Ascending aorta (tissue), 2 donors: ENCODE measurements at regions of chr15 and their contacts with region 1.

Region 1: DNA sequence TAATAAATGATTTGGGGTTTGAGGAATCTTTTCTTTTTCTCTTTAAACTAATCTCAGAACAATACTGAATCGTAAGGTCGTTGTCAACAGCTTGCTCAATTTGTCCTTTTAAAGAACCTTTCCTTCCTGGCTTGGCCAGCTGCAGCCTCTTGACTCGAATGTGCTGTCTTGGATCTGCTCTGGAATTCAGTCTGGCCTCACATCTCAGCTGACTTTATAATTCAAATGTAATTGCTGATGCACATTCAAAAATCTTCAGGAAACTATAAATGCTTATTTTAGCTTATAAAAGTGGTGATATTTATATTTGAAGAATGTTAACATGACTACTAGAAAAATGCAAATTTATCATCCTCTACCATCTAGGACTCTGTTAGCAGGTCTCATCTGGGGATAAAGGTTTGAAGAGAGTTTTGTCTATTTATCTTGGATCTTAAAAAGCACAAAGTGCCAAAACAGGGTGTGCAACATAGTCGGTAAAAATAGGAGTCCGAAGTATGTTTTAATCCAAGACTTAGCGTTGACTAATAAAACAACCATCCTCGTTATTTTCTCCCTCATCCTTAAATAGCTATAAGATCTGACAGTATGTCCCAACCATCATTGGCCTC is 1035.2 kb downstream of the MCTP2 start:
- DNase-seq: peak in 1 of 2 donors; percentile 68
- H3K4me3 ChIP-seq: no peak overlapping the region
- H3K27ac ChIP-seq: peak overlapping the region; percentile 82 to 90
- H3K4me1 ChIP-seq: peaks cover 3 to 42% of the 10 kb centered on the region in 2 donors
- H3K27me3 ChIP-seq: no peaks in the 10 kb centered on the region
- CTCF ChIP-seq: no peak

Region 2: DNA sequence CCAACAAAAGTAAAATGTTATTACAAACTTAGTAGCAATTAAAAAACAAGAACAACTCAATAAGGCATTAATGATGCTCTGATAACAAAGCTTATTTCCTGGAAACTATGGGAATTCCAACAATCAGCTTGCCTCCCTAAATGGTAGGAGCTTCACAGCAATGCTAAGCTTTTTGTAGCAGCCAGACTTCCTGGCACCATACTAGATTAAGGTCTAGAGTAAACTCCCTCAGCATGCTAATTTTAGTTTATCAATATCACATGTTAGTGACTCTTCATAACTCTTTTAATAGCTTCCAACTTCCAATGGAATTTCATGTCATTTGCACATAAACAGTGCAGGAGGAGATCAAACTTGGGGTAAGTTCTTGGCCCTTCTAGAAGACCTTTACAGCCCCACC is 253.2 kb before region 1 on chr15:
- intact Hi-C with region 1: no loop called
- DNase-seq: no peak
- H3K4me3 ChIP-seq: no peak overlapping the region
- H3K27ac ChIP-seq: no peak overlapping the region
- H3K4me1 ChIP-seq: no peaks in the 10 kb centered on the region
- H3K27me3 ChIP-seq: no peaks in the 10 kb centered on the region
- CTCF ChIP-seq: no peak

Region 3: GRCh38 chr15:95086531-95087252 is 179.9 kb before region 1 on chr15:
- intact Hi-C with region 1: no loop called
- DNase-seq: no peak
- H3K4me3 ChIP-seq: no peak overlapping the region
- H3K27ac ChIP-seq: no peak overlapping the region
- H3K4me1 ChIP-seq: no peaks in the 10 kb centered on the region
- H3K27me3 ChIP-seq: no peaks in the 10 kb centered on the region
- CTCF ChIP-seq: no peak

Region 4: DNA sequence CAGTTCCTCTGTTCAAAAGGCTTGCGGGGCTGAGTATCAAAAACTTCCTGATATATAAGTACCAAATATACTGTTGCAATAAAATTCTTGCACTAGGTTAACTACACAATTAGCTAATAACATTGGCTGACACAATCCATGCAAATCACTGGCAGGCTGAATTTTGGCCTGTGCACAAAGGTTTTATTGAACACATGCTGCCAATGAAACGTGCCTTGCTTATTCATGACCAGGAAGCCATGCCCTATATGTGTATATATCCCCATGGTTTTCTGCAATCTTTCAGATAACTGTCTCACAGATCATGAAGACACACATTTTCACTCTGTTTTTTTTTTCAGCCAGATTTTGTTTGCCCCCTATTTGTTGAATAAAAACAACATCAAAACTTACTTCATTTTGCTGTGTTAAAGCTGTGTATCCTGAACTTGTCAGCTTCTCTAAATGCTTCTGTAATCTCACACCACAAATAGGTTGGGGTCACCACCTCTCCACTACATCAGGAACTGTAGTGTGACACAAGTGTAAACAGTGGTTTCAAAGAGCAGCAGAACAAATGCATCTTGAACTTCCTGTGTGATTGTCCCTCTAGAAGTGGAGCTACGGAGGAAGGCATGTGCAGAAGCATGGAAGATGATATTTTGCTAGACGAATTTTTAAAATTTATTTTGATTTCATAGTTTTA is 143.2 kb after region 1 on chr15:
- intact Hi-C with region 1: loop called (anchors 5 kb)
- DNase-seq: no peak
- H3K4me3 ChIP-seq: no peak overlapping the region
- H3K27ac ChIP-seq: peak overlapping the region in 1 of 2 donors; percentile 39
- H3K4me1 ChIP-seq: peaks cover 0 to 33% of the 10 kb centered on the region in 2 donors
- H3K27me3 ChIP-seq: no peaks in the 10 kb centered on the region
- CTCF ChIP-seq: no peak

Region 5: DNA sequence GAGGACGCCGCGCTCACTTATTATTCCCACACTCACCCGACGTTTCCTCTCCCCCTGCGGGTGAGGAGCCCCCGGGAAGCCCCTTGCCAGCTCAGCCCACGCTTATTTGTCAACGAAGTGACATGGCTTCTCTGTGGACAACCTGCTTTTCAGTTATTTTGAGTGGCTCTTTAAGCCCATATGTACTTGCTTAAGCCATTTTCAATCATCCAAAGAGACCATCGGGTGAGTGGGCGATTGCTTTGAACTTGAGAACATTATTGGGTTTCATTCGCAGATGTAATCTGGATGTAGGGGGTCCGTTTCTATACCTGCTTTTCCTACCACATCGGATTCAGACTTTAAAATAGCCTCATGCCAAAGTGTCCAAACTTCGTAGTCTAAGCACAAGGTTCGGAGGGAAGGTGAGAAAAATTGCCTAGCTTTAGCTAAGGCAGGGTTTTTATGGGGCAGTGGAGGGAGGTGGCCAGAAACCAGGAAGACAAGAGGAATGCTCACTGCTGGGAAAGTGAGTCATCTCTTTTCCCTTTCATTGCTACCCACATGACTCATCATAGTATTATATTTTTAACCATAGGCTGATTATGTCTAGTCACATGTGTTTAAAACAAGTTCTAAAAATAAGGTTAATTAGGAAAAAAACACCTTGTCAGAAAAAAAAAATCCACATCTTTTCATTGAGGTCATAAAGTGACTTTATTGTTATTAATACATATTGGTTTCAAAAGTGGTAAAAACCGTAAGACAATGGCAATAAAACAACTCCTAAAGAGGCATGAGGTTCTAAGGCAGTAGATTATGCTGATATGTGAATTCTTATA is 290.9 kb after region 1 on chr15:
- intact Hi-C with region 1: loop called (anchors 5 kb)
- DNase-seq: no peak
- H3K4me3 ChIP-seq: no peak overlapping the region
- H3K27ac ChIP-seq: peak overlapping the region; percentile 81 to 86
- H3K4me1 ChIP-seq: peaks cover 3 to 18% of the 10 kb centered on the region in 2 donors
- H3K27me3 ChIP-seq: no peaks in the 10 kb centered on the region
- CTCF ChIP-seq: no peak

Region 6: DNA sequence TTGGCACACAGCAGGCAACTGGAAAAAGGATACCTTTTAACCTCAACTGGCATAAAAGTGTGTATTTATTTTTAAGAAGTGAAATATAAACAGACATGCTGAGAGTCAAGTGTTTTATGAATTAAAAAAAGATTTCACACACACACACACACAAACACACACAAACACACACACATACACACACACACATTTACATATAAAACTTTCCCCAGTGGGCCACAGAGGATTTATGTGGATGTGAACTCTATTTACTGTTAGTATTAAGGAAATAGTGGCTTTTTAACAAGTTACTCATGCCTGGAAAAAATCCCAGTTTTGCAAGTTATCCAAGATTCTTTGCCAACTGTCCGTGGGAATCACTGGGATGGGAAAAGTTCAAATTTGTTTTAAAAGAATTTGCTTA is 338.1 kb after region 1 on chr15:
- intact Hi-C with region 1: loop called (anchors 5 kb)
- DNase-seq: peak in 1 of 2 donors; percentile 64
- H3K4me3 ChIP-seq: no peak overlapping the region
- H3K27ac ChIP-seq: peak overlapping the region in 1 of 2 donors; percentile 46
- H3K4me1 ChIP-seq: peaks cover 0 to 18% of the 10 kb centered on the region in 2 donors
- H3K27me3 ChIP-seq: no peaks in the 10 kb centered on the region
- CTCF ChIP-seq: no peak

Region 7: GRCh38 chr15:96750361-96750760 is 1483.8 kb after region 1 on chr15:
- intact Hi-C with region 1: no loop called
- DNase-seq: no peak
- H3K4me3 ChIP-seq: no peak overlapping the region
- H3K27ac ChIP-seq: no peak overlapping the region
- H3K4me1 ChIP-seq: no peaks in the 10 kb centered on the region
- H3K27me3 ChIP-seq: no peaks in the 10 kb centered on the region
- CTCF ChIP-seq: no peak